Activated CD4-positive, alpha-beta T cell treated with anti-CD3 and anti-CD28 coated beads, Interleukin-2, amount 10 ng/mL, durations not matched to agents 24 days and 14 days (primary cell): ENCODE measurements at regions of chr11 and their contacts with region 1.

Region 1: DNA sequence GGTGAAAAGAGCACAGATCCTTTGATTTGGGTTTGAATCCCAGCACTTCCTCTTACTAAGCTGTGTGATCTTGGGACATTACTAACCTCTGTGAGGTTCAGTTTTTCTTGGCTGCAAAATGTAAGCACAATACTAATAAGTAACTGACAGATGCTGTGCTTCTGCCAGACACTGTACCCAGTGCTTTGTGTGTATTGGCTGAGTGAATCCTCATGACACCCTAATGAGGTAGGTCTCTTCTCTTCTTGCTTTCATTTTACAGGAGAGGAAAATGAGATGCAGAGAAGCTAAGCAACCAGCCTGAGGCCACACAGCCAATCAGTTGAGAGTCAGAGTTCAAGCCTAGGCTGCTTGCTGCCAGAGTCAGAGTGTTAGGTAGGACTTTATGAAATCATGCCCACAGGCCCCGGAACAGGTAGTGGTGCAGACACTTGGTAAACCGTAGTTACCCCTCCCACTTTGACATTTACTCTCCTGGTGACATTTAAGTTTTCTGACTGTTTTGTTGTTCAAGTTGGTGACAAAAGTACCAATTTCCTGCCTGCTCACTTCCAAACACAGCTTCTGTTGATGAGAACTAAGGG is 21.2 kb downstream of the PTPRJ start:
- DNase-seq: peak; percentile 96
- H3K4me3 Mint-ChIP-seq: peak overlapping the region; percentile 75
- H3K27ac Mint-ChIP-seq: peak overlapping the region; percentile 99
- H3K4me1 Mint-ChIP-seq: peaks cover 77% of the 10 kb centered on the region
- H3K27me3 Mint-ChIP-seq: no peaks in the 10 kb centered on the region

Region 2: GRCh38 chr11:47514825-47515647 is 486.5 kb before region 1 on chr11:
- intact Hi-C with region 1: loop called (anchors 2 kb)
- DNase-seq: peak; percentile 66
- H3K4me3 Mint-ChIP-seq: peak overlapping the region; percentile 60
- H3K27ac Mint-ChIP-seq: peak overlapping the region; percentile 91
- H3K4me1 Mint-ChIP-seq: peaks cover 54% of the 10 kb centered on the region
- H3K27me3 Mint-ChIP-seq: no peaks in the 10 kb centered on the region

Region 3: DNA sequence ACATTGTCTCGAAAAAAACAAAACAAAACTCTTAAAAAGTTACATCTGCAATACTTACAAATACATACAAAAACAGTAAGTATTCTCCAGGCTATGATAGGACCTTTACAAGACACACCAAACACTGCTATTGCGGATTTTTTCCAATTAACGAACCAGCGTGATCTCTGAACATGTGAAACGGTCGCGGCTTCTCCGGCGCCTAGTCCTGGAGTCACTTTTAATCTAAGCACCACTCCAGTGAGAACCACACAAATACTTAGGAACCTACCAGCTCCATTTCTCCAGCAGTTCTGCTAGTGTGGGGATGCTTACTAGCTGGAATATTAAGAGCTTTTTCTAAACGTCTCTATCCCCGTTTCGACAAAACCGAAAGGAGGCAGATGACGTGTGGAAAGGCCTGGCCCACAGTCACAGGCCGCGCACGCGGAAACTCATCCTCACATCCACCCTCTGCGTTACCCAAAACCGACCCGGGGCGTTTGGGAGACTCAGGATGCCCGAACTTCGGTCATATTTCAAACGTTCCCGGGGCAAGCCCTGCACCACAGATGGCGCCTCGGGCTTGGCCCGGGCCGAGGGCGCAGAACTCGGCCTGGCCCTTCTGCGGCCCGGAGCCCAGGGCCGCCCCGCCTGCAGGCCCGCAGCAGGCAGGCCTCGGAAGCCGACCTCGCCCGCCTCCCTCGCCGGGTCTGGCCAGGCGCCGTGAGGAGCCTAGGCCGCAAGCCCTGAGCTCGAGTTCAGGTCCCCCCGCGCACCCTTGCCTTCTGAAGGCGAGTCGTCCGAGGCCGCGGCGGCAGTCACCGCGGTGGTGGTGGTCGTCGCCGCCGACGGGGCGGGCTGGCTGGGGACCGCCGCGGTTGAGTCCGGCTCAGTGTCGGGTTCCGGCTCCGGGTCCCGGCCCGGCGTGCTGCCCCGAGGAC is 235.0 kb before region 1 on chr11:
- intact Hi-C with region 1: loop called (anchors 1 kb)
- DNase-seq: peak; percentile 93
- H3K4me3 Mint-ChIP-seq: peak overlapping the region; percentile 100
- H3K27ac Mint-ChIP-seq: peak overlapping the region; percentile 100
- H3K4me1 Mint-ChIP-seq: peaks cover 21% of the 10 kb centered on the region
- H3K27me3 Mint-ChIP-seq: no peaks in the 10 kb centered on the region

Region 4: DNA sequence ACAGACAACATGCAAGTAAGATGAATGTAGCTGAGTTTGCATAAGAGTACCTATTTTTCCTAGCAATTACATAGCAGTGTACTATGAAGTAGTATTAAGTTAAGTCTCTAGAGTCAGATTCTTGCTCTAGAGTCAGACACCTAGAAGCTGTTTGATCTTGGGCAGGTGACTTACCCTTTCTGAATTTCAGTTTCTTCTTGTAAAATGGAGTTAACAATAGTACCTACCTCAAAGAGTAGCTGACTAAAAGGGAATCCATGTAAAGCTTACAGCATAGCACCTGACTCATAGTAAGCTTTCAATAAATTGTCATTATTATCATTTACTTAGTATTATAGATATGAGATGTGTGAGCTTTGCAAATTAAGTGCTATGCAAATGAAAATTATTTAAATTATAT is 69.0 kb before region 1 on chr11:
- intact Hi-C with region 1: loop called (anchors 2 kb)
- DNase-seq: no peak
- H3K4me3 Mint-ChIP-seq: no peak overlapping the region
- H3K27ac Mint-ChIP-seq: no peak overlapping the region
- H3K4me1 Mint-ChIP-seq: peaks cover 22% of the 10 kb centered on the region
- H3K27me3 Mint-ChIP-seq: no peaks in the 10 kb centered on the region

Region 5: GRCh38 chr11:47991266-47991830 is 10.2 kb before region 1 on chr11:
- intact Hi-C with region 1: loop called (anchors 1 kb)
- DNase-seq: no peak
- H3K4me3 Mint-ChIP-seq: peak overlapping the region; percentile 61
- H3K27ac Mint-ChIP-seq: peak overlapping the region; percentile 85
- H3K4me1 Mint-ChIP-seq: peaks cover 54% of the 10 kb centered on the region
- H3K27me3 Mint-ChIP-seq: no peaks in the 10 kb centered on the region

Region 6: GRCh38 chr11:48020092-48020755 is 18.7 kb after region 1 on chr11:
- intact Hi-C with region 1: loop called (anchors 1 kb)
- DNase-seq: no peak
- H3K4me3 Mint-ChIP-seq: peak overlapping the region; percentile 49
- H3K27ac Mint-ChIP-seq: peak overlapping the region; percentile 87
- H3K4me1 Mint-ChIP-seq: peaks cover 73% of the 10 kb centered on the region
- H3K27me3 Mint-ChIP-seq: no peaks in the 10 kb centered on the region

Region 7: DNA sequence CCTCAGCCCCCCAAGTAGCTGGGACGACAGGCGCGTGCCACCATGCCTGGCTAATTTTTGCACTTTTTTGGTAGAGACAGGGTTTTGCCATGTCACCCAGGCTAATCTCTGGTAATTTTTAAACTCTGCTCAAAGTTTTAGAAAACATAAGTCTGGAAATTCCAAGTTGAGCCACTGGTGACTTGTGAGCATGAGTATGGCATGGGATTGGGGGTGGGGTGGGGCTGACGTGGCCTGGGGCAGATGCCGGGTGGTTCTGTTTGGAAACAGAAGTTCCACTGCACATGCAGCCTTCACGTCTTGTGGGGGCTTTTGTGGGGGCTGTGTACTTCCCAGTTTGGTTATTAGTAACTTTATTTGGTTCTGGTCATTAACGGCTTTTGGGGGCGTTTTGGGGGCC is 46.1 kb after region 1 on chr11:
- intact Hi-C with region 1: no loop called
- DNase-seq: no peak
- H3K4me3 Mint-ChIP-seq: no peak overlapping the region
- H3K27ac Mint-ChIP-seq: no peak overlapping the region
- H3K4me1 Mint-ChIP-seq: peaks cover 78% of the 10 kb centered on the region
- H3K27me3 Mint-ChIP-seq: no peaks in the 10 kb centered on the region